ENCODE measurements at regions of chr14 and their contacts with region 1.

Region 1: GRCh38 chr14:80941241-80942182 is at the start of gene CEP128:
- DNase-seq: peak; percentile 92
- H3K4me3 Mint-ChIP-seq: peak within 1 kb of the TSS; percentile 88
- H3K27ac Mint-ChIP-seq: peak within 1 kb of the TSS; percentile 66
- H3K4me1 Mint-ChIP-seq: peaks cover 32% of the 10 kb centered on the region
- H3K27me3 Mint-ChIP-seq: no peaks in the 10 kb centered on the region
- total RNA-seq, gene CEP128: 24.7 to 26.0 TPM

Region 2: GRCh38 chr14:80770114-80770908 is 171.2 kb before region 1 on chr14:
- CTCF ChIA-PET with region 1: no interaction called
- POLR2A ChIA-PET with region 1: no interaction called
- DNase-seq: no peak
- H3K4me3 Mint-ChIP-seq: no peak overlapping the region
- H3K27ac Mint-ChIP-seq: no peak overlapping the region
- H3K4me1 Mint-ChIP-seq: no peaks in the 10 kb centered on the region
- H3K27me3 Mint-ChIP-seq: no peaks in the 10 kb centered on the region

Region 3: DNA sequence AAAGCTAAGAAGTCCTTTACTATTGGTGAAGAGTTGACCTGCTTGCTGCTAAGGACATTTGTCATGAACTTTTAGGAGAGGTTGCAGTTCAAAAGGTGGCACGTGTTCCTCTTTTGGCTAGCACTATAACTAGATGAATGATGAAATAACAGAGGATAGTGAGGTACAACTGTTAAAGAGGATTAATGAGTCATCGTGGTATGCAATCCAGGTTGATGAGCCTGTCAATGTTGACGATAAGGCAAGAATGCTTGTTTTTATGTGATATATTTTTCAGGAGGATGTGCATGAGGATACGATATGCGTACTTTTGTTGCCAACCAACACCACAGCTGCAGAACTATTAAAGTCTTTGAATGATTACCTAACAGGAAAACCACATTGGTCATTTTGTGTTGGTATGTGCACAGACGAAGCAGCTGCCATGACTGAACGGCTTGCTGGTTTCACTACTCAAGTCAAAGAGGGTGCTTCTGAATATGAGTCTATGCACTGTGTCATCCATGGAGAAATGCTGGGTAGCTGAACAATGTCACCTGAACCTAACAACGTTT is 10.6 kb before region 1 on chr14:
- CTCF ChIA-PET with region 1: interaction called, 16 read pairs
- POLR2A ChIA-PET with region 1: interaction called, 42 read pairs
- DNase-seq: peak; percentile 70
- H3K4me3 Mint-ChIP-seq: peak overlapping the region; percentile 42
- H3K27ac Mint-ChIP-seq: peak overlapping the region; percentile 88
- H3K4me1 Mint-ChIP-seq: peaks cover 64% of the 10 kb centered on the region
- H3K27me3 Mint-ChIP-seq: no peaks in the 10 kb centered on the region

Region 4: DNA sequence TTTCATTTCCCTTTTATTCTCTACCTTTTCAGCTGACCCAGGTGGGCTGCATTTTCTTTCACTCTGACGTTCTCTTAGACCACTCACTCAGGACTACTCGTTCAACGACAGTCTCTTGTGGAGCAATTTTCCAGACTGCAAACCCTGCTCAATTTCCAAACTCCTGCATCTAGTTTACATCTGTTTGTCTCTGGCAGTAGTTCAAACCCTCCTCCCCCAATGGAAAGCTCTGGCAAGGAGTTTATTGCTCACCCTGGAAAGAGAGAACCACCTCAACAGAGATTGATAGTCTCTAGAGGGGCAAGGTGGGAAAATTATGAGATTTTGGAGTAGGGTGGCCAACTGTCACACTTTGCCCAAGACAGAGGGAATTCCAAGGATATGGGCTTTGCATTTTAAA is 144.1 kb after region 1 on chr14:
- CTCF ChIA-PET with region 1: no interaction called
- POLR2A ChIA-PET with region 1: no interaction called
- DNase-seq: no peak
- H3K4me3 Mint-ChIP-seq: no peak overlapping the region
- H3K27ac Mint-ChIP-seq: no peak overlapping the region
- H3K4me1 Mint-ChIP-seq: no peaks in the 10 kb centered on the region
- H3K27me3 Mint-ChIP-seq: no peaks in the 10 kb centered on the region